HepG2 (cell line): ENCODE measurements at regions of chr1 and their contacts with region 1.

Region 1: GRCh38 chr1:183841950-183842794 is 37.3 kb downstream of the RGL1 start:
- DNase-seq: peak; percentile 88
- ATAC-seq: peak; percentile 97
- H3K4me3 ChIP-seq: peak overlapping the region; percentile 3 to 74 (median 42); a peak in 5 of 6 replicates
- H3K27ac ChIP-seq: peak overlapping the region; percentile 76
- H3K4me1 ChIP-seq: peaks cover 36% of the 10 kb centered on the region
- H3K27me3 ChIP-seq: no peaks in the 10 kb centered on the region
- CTCF ChIP-seq: no peak
- EP300 ChIP-seq: peak in 1 of 2 experiments; percentile 81; a peak in 3 of 4 replicates
- POLR2A ChIP-seq: peak in 1 of 2 experiments; percentile 61; a peak in 2 of 4 replicates
- RAD21 ChIP-seq: no peak

Region 2: GRCh38 chr1:182629499-182630096 is 1212.6 kb before region 1 on chr1:
- CTCF ChIA-PET with region 1: no interaction called
- POLR2A ChIA-PET with region 1: no interaction called
- in situ Hi-C with region 1: no loop called
- intact Hi-C with region 1: no loop called
- DNase-seq: no peak
- ATAC-seq: no peak
- H3K4me3 ChIP-seq: no peak overlapping the region
- H3K27ac ChIP-seq: no peak overlapping the region
- H3K4me1 ChIP-seq: no peaks in the 10 kb centered on the region
- H3K27me3 ChIP-seq: peaks cover 0 to under 1% of the 10 kb centered on the region in 2 experiments; a peak in 1 of 5 replicates
- CTCF ChIP-seq: no peak
- EP300 ChIP-seq: no peak
- POLR2A ChIP-seq: no peak
- RAD21 ChIP-seq: no peak

Region 3: DNA sequence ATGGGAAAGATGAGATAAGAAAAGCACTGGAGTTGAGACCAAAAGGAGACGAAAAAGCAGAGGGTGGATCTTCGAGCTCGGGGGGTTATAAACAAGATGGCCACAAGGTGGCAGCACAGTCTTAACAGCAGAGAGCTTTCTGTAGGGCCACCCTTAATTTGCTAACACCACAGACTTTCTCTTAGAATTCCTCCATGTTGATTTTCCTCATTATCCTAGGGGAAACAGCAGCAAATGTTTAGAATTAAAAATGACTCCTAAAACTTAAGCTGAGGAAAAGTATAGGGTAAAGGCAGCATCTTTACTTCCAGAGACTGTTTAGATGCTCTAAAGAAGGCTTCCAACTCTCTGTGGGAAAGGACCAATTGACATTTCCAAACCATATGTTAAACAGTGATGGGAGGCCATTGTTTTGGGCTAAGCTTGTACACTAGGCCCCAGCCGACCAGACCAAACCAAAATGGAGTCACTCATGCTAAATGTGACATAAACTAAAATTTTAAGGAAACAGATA is 186.6 kb before region 1 on chr1:
- CTCF ChIA-PET with region 1: no interaction called
- POLR2A ChIA-PET with region 1: no interaction called
- in situ Hi-C with region 1: no loop called
- intact Hi-C with region 1: no loop called
- DNase-seq: peak; percentile 67
- ATAC-seq: peak; percentile 84
- H3K4me3 ChIP-seq: no peak overlapping the region
- H3K27ac ChIP-seq: no peak overlapping the region
- H3K4me1 ChIP-seq: peaks cover 14% of the 10 kb centered on the region
- H3K27me3 ChIP-seq: no peaks in the 10 kb centered on the region
- CTCF ChIP-seq: peak; percentile 87
- EP300 ChIP-seq: no peak
- POLR2A ChIP-seq: no peak
- RAD21 ChIP-seq: peak; percentile 87

Region 4: DNA sequence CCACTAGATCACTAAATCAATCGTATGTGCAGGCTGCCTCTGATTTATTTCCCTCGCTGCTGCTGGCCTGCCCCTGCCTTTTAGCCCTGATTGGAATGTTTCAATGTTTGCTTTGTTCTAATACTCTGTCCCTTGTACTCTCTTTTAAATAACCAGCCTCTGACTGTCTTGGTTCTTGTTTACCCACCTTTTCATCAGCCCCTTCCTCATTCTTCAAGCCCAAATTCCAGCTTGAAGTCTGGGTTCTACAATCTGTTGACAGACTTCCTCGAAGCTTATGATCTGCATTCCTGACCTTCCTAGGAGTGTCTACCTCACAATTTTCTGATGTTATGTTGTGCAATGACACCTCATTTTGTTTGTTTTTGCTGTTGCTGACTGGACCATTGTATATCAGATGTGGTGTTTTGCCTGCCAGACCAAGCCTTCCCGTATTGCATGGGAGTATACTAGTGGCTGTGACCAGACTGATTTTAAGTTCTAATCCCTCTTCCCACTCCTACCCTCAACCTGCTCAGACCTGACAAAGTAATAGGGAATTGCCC is 142.5 kb before region 1 on chr1:
- CTCF ChIA-PET with region 1: no interaction called
- POLR2A ChIA-PET with region 1: no interaction called
- in situ Hi-C with region 1: no loop called
- intact Hi-C with region 1: loop called (anchors 1 kb)
- DNase-seq: peak; percentile 99
- ATAC-seq: peak; percentile 98
- H3K4me3 ChIP-seq: no peak overlapping the region
- H3K27ac ChIP-seq: peak overlapping the region; percentile 82
- H3K4me1 ChIP-seq: peaks cover 50% of the 10 kb centered on the region
- H3K27me3 ChIP-seq: no peaks in the 10 kb centered on the region
- CTCF ChIP-seq: no peak
- EP300 ChIP-seq: peak; percentile 89 to 94
- POLR2A ChIP-seq: no peak
- RAD21 ChIP-seq: no peak

Region 5: DNA sequence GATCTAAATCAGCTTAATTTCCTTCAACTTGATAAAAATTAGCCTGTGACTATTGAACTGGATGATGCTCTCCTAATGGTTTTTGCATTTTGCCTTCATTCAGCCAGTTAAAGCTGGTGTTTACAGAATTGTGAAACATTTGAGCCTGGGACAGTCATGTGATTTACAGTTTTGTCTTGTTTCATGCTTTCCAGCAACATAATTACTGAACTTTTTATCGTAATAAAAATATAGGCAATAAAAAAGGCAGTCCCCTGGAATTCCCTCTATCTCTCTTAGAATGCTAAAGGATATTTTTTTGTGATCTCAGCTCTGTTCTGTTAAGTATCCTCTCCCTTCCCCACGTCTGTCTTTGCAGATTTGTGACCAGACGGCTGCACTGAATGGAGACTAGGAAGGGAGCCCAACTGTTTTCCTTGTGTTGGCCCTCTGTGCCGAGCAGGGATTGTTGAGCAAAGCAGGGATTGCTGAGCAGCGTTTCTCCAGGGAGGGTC is 107.6 kb before region 1 on chr1:
- CTCF ChIA-PET with region 1: no interaction called
- POLR2A ChIA-PET with region 1: no interaction called
- in situ Hi-C with region 1: no loop called
- intact Hi-C with region 1: loop called (anchors 10 kb)
- DNase-seq: no peak
- ATAC-seq: no peak; the same call in 2 of the 3 replicates
- H3K4me3 ChIP-seq: no peak overlapping the region
- H3K27ac ChIP-seq: peak overlapping the region; percentile 36
- H3K4me1 ChIP-seq: peaks cover 45% of the 10 kb centered on the region
- H3K27me3 ChIP-seq: no peaks in the 10 kb centered on the region
- CTCF ChIP-seq: no peak
- EP300 ChIP-seq: no peak
- POLR2A ChIP-seq: no peak
- RAD21 ChIP-seq: no peak

Region 6: GRCh38 chr1:183804881-183805841 is 37.0 kb before region 1 on chr1 and contains the start of gene RGL1:
- CTCF ChIA-PET with region 1: no interaction called
- POLR2A ChIA-PET with region 1: interaction called, 3 read pairs
- in situ Hi-C with region 1: no loop called
- intact Hi-C with region 1: loop called (anchors 5 kb)
- DNase-seq: peak; percentile 61
- ATAC-seq: peak; percentile 91
- H3K4me3 ChIP-seq: peak within 1 kb of the TSS; percentile 71 to 83 (median 72)
- H3K27ac ChIP-seq: no peak within 1 kb of the TSS
- H3K4me1 ChIP-seq: peaks cover 30% of the 10 kb centered on the region
- H3K27me3 ChIP-seq: no peaks in the 10 kb centered on the region; a peak in 1 of 5 replicates
- CTCF ChIP-seq: no peak
- EP300 ChIP-seq: no peak
- POLR2A ChIP-seq: peak in 1 of 2 experiments; percentile 60; a peak in 2 of 4 replicates
- RAD21 ChIP-seq: 0 out of 2 replicates have a peak, but pooled peaks have one; percentile 24
- total RNA-seq, gene RGL1: 4.7 and 5.7 TPM in 2 replicates

Region 7: GRCh38 chr1:183891158-183891856 is 49.1 kb after region 1 on chr1:
- CTCF ChIA-PET with region 1: no interaction called
- POLR2A ChIA-PET with region 1: no interaction called
- in situ Hi-C with region 1: no loop called
- intact Hi-C with region 1: loop called (anchors 5 kb)
- DNase-seq: no peak
- ATAC-seq: no peak
- H3K4me3 ChIP-seq: no peak overlapping the region
- H3K27ac ChIP-seq: no peak overlapping the region
- H3K4me1 ChIP-seq: peaks cover 23% of the 10 kb centered on the region
- H3K27me3 ChIP-seq: no peaks in the 10 kb centered on the region
- CTCF ChIP-seq: no peak
- EP300 ChIP-seq: no peak
- POLR2A ChIP-seq: no peak
- RAD21 ChIP-seq: no peak

Region 8: DNA sequence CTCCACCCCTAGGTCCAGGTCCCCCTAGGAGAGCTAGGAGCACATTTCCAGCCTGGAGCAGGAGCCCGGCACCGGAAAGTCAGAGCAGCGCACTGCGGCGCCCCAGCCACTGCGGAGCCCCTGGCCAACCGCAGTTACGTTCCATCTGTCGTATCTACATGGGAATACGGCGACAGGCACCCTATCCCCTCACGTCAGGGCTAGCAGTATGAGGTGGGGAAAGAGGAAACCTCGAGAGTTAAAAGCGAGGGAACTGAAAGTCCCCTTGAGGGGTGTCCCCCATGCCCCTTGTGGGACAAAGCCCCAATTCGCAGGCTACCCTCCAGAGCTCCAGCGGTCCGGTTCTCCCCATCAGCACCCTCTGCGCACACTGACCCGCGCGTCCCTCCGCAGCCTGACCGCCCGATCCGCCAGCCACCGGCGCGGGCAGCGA is 194.4 kb after region 1 on chr1:
- CTCF ChIA-PET with region 1: no interaction called
- POLR2A ChIA-PET with region 1: no interaction called
- in situ Hi-C with region 1: no loop called
- intact Hi-C with region 1: loop called (anchors 10 kb)
- DNase-seq: peak; percentile 42
- ATAC-seq: peak; percentile 85
- H3K4me3 ChIP-seq: peak overlapping the region; percentile 41 to 74 (median 66); a peak in 5 of 6 replicates
- H3K27ac ChIP-seq: no peak overlapping the region
- H3K4me1 ChIP-seq: peaks cover 31% of the 10 kb centered on the region
- H3K27me3 ChIP-seq: peaks cover 1 to 51% of the 10 kb centered on the region in 2 experiments; a peak in 4 of 5 replicates
- CTCF ChIP-seq: no peak
- EP300 ChIP-seq: no peak
- POLR2A ChIP-seq: no peak
- RAD21 ChIP-seq: no peak